ENCODE measurements at regions of chr20 and their contacts with region 1.

Region 1: GRCh38 chr20:36399147-36399968 is 93.2 kb downstream of the DLGAP4 start:
- DNase-seq: peak; percentile 80
- ATAC-seq: peak; percentile 77
- H3K4me3 Mint-ChIP-seq: no peak overlapping the region
- H3K27ac Mint-ChIP-seq: no peak overlapping the region
- H3K4me1 Mint-ChIP-seq: no peaks in the 10 kb centered on the region
- H3K27me3 Mint-ChIP-seq: peaks cover 20% of the 10 kb centered on the region
- CTCF ChIP-seq: peak; percentile 61

Region 2: DNA sequence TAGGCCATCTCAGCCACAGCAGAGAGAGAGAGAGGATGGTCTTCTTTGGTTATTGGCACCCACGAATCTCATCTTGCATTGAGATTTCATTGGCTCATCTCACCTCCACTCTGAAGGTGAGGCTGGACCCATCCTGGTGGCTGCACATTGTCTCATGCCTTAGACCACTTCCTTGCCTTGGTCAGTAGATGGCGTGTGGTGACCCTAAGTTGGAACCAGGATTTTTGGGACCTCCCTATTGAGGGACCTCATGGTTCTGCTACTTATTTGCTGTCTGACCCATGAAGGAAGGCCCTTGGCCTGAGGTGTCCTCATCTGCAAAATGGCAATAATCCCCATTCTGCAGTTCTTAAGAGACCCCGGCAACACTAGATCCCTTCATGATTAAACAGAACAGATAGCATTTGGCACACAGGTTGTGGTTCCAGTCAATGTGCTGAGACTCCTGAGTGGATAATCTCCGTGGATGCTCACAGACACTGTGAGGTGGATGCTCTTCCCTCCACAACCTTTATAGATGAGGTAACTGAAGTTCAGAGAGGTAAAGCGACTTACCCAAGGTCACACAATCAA is 184.6 kb before region 1 on chr20:
- CTCF ChIA-PET with region 1: interaction called, 10 read pairs
- POLR2A ChIA-PET with region 1: no interaction called
- intact Hi-C with region 1: no loop called
- DNase-seq: peak; percentile 22
- ATAC-seq: peak; percentile 71
- H3K4me3 Mint-ChIP-seq: no peak overlapping the region
- H3K27ac Mint-ChIP-seq: no peak overlapping the region
- H3K4me1 Mint-ChIP-seq: no peaks in the 10 kb centered on the region
- H3K27me3 Mint-ChIP-seq: no peaks in the 10 kb centered on the region
- CTCF ChIP-seq: peak; percentile 62

Region 3: GRCh38 chr20:36273414-36274180 is 125.8 kb before region 1 on chr20:
- CTCF ChIA-PET with region 1: interaction called, 22 read pairs
- POLR2A ChIA-PET with region 1: no interaction called
- intact Hi-C with region 1: no loop called
- DNase-seq: peak; percentile 44
- ATAC-seq: no peak
- H3K4me3 Mint-ChIP-seq: no peak overlapping the region
- H3K27ac Mint-ChIP-seq: no peak overlapping the region
- H3K4me1 Mint-ChIP-seq: no peaks in the 10 kb centered on the region
- H3K27me3 Mint-ChIP-seq: no peaks in the 10 kb centered on the region
- CTCF ChIP-seq: peak; percentile 16

Region 4: GRCh38 chr20:36411861-36412454 is 12.6 kb after region 1 on chr20:
- CTCF ChIA-PET with region 1: interaction called, 10 read pairs
- POLR2A ChIA-PET with region 1: no interaction called
- intact Hi-C with region 1: no loop called
- DNase-seq: no peak
- ATAC-seq: no peak
- H3K4me3 Mint-ChIP-seq: no peak overlapping the region
- H3K27ac Mint-ChIP-seq: no peak overlapping the region
- H3K4me1 Mint-ChIP-seq: no peaks in the 10 kb centered on the region
- H3K27me3 Mint-ChIP-seq: peaks cover 2% of the 10 kb centered on the region
- CTCF ChIP-seq: no peak

Region 5: GRCh38 chr20:36439040-36439730 is 39.8 kb after region 1 on chr20:
- CTCF ChIA-PET with region 1: interaction called, 24 read pairs
- POLR2A ChIA-PET with region 1: no interaction called
- intact Hi-C with region 1: no loop called
- DNase-seq: peak; percentile 84
- ATAC-seq: peak; percentile 70
- H3K4me3 Mint-ChIP-seq: no peak overlapping the region
- H3K27ac Mint-ChIP-seq: no peak overlapping the region
- H3K4me1 Mint-ChIP-seq: peaks cover 3% of the 10 kb centered on the region
- H3K27me3 Mint-ChIP-seq: peaks cover 6% of the 10 kb centered on the region
- CTCF ChIP-seq: peak; percentile 83

Measured in activated CD8-positive, alpha-beta T cell treated with anti-CD3 and anti-CD28 coated beads for 36 hours (primary cell).